ENCODE measurements at regions of chr1 and their contacts with region 1.

Region 1: GRCh38 chr1:175043824-175044223 is 20.6 kb upstream of the MRPS14 start:
- DNase-seq: no peak
- ATAC-seq: no peak
- H3K4me3 ChIP-seq: no peak overlapping the region
- H3K27ac ChIP-seq: no peak overlapping the region
- H3K4me1 ChIP-seq: peaks cover 14% of the 10 kb centered on the region
- H3K27me3 ChIP-seq: no peaks in the 10 kb centered on the region
- CTCF ChIP-seq: no peak
- EP300 ChIP-seq: no peak
- POLR2A ChIP-seq: no peak
- RAD21 ChIP-seq: no peak

Region 2: DNA sequence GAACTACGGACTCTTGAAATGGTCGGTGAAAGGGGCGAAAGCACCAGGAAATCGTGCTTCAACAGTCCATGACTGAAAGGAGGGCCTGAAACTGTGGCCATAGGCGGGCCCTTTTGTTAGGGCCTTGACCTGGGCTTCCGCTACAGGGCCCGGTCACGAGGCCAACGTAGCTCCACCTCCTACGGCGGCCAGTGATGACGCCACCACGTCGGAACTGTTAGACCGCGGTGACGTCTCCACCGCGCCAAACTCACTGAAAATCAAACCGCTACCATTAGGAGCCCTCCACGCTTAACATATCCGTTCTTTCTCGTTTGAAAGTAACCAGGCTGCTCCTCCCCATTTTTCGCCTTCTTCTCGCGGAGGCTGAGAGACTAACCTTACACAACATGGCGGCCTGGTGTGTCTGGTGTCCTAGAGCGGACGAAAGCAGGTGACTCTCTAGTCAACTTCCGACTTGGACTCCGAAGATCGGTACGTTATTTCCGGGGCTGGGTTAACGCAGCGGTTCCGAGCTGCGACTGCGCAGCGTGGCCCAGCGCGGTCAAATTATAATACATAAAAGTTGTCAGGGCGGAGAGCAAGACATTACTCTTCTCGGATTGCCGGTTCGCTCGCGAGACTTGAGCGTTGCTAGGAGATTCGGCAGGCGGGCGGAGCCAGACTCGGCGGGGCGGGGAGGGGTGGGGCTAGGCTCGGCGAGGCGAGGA is 44.5 kb before region 1 on chr1:
- CTCF ChIA-PET with region 1: no interaction called
- POLR2A ChIA-PET with region 1: no interaction called
- in situ Hi-C with region 1: no loop called
- intact Hi-C with region 1: no loop called
- DNase-seq: peak; percentile 97
- ATAC-seq: peak; percentile 89
- H3K4me3 ChIP-seq: peak overlapping the region; percentile 68 to 92 (median 79)
- H3K27ac ChIP-seq: peak overlapping the region; percentile 98
- H3K4me1 ChIP-seq: peaks cover 69% of the 10 kb centered on the region
- H3K27me3 ChIP-seq: no peaks in the 10 kb centered on the region; a peak in 1 of 5 replicates
- CTCF ChIP-seq: no peak
- EP300 ChIP-seq: peak in 1 of 2 experiments; percentile 41; a peak in 1 of 4 replicates
- POLR2A ChIP-seq: peak; percentile 95 to 97
- RAD21 ChIP-seq: no peak

Region 3: GRCh38 chr1:175023043-175023921 is 20.5 kb before region 1 on chr1 and contains the start of gene MRPS14:
- CTCF ChIA-PET with region 1: no interaction called
- POLR2A ChIA-PET with region 1: no interaction called
- in situ Hi-C with region 1: no loop called
- intact Hi-C with region 1: no loop called
- DNase-seq: peak; percentile 96
- ATAC-seq: peak; percentile 97
- H3K4me3 ChIP-seq: peak within 1 kb of the TSS; percentile 94 to 99 (median 99)
- H3K27ac ChIP-seq: peak within 1 kb of the TSS; percentile 90
- H3K4me1 ChIP-seq: peaks cover 19% of the 10 kb centered on the region
- H3K27me3 ChIP-seq: no peaks in the 10 kb centered on the region; a peak in 1 of 5 replicates
- CTCF ChIP-seq: no peak
- EP300 ChIP-seq: peak in 1 of 2 experiments; percentile 49; a peak in 2 of 4 replicates
- POLR2A ChIP-seq: peak; percentile 88 to 92
- RAD21 ChIP-seq: no peak
- total RNA-seq, gene MRPS14: 43.2 and 52.7 TPM in 2 replicates

Region 4: GRCh38 chr1:175118375-175119367 is 74.8 kb after region 1 on chr1:
- CTCF ChIA-PET with region 1: no interaction called
- POLR2A ChIA-PET with region 1: no interaction called
- in situ Hi-C with region 1: loop called (anchors 5 kb)
- intact Hi-C with region 1: no loop called
- DNase-seq: no peak
- ATAC-seq: no peak
- H3K4me3 ChIP-seq: no peak overlapping the region
- H3K27ac ChIP-seq: no peak overlapping the region
- H3K4me1 ChIP-seq: no peaks in the 10 kb centered on the region
- H3K27me3 ChIP-seq: no peaks in the 10 kb centered on the region
- CTCF ChIP-seq: no peak
- EP300 ChIP-seq: no peak
- POLR2A ChIP-seq: no peak
- RAD21 ChIP-seq: no peak

Region 5: DNA sequence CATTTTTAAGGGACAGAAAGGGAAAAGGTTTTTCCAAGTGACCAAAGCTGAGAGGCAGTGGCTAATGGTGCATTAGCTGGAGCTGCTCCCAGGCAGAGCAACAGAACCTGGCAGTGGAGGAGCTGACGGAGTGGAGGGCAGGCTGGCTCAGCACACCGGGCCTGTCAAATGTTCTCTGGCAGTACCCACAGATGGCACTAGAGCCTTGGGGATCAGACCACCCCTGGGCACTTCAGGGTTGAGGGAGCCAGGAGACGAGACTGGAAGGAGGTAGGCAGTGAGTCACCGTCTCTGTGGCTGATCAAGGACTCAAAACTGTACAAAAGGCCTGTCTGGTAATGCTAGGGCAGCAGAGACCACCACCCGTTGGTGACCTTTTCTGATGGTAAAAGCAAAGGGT is 270.5 kb after region 1 on chr1:
- CTCF ChIA-PET with region 1: no interaction called
- POLR2A ChIA-PET with region 1: no interaction called
- in situ Hi-C with region 1: no loop called
- intact Hi-C with region 1: loop called (anchors 5 kb)
- DNase-seq: no peak
- ATAC-seq: no peak
- H3K4me3 ChIP-seq: no peak overlapping the region
- H3K27ac ChIP-seq: no peak overlapping the region
- H3K4me1 ChIP-seq: no peaks in the 10 kb centered on the region
- H3K27me3 ChIP-seq: peaks cover 3 to 14% of the 10 kb centered on the region in 2 experiments; a peak in 3 of 5 replicates
- CTCF ChIP-seq: no peak
- EP300 ChIP-seq: no peak
- POLR2A ChIP-seq: no peak
- RAD21 ChIP-seq: no peak